ENCODE measurements at regions of chr22 and their contacts with region 1.

Region 1: DNA sequence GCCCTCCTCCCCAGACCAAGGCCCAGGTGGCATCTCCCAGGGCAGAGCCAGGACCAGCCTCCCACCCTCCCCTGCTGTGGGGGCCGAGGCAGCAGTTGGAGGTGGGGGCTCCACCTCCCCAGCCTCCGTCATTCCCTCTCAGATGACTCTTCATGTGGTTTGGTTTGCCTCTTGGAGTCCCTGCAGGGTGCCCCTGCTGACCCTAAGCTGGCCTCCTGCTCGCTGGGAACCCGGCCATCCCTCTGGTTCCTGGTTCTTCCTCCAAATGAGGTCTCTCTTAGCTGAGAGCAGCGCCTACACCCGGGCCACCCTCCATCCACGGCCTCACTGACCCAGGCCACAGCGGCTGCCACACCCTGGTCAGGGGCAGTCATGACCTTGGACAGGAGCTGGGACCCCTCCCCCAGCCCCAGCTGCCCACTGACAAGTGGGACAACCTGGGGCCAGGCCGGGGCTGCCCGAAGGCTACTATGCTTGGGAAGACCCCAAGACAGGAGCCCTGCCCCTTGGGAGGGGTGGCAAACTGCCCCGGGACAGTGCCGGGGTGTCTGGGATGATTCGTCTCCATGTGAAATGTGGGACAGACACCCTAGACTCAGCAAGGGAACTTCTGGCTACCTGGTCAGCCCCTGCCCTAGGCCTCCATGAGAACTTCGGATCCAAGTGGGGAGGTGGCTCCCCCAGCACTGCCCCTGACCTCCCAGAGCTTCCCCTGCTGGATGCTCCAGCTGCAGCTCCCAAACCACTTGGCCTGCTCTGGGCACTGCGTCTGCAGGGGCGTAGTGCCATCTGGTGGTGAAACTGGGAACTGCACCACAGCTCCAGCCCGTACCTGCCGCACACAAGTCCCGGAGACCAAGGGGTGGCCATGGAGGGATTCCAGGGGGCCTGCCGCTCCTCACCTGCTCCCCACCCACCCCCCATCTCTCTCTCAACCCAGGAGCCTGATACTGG is 194.5 kb downstream of the IGLL1 start:
- DNase-seq: peak; percentile 83 to 94 (median 91)
- H3K4me3 ChIP-seq: no peak overlapping the region
- H3K27ac ChIP-seq: no peak overlapping the region
- H3K4me1 ChIP-seq: peaks cover 0 to 2% (median 0%) of the 10 kb centered on the region in 3 donors
- H3K27me3 ChIP-seq: no peaks in the 10 kb centered on the region
- CTCF ChIP-seq: peak; percentile 100

Region 2: DNA sequence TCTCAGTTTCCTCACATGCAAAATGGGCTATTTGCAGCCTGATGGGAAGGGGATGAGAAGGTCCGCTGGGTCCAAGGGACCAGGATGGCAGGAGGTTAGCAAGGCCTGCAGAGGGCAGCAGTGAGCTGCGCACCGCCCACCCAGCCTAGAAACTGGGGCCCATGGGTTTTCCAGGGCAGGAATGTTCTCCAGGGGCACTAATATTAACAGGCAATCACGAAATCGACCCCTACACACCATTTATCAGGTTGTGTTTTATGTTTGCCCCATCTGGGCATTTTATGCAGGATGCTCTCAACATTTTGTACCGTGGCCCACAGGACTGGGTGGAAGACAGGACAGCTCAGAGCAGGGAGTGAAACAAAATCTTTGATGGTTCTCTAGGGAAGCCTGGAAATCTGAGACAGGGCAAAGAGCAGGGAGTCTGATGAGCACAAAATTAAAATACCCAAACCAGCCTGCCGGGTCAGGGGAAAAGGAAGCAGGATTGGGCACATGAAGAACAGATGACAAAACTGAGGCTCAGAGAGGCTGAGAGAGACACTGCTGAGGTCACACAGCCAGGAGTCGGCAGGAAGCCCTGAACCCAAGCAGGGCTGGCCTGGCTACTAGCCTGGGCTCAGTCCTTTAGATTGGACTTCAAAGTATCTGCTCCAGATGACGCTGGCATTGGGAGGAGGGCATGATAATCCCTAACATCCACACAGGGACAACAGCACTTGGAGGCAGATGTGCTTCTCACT is 206.9 kb before region 1 on chr22:
- intact Hi-C with region 1: loop called (anchors 10 kb)
- DNase-seq: peak; percentile 79 to 85 (median 83)
- H3K4me3 ChIP-seq: peak overlapping the region in 1 of 3 donors; percentile 2
- H3K27ac ChIP-seq: peak overlapping the region; percentile 77 to 85
- H3K4me1 ChIP-seq: peaks cover 0 to 29% (median 22%) of the 10 kb centered on the region in 3 donors
- H3K27me3 ChIP-seq: no peaks in the 10 kb centered on the region
- CTCF ChIP-seq: peak; percentile 92

Region 3: GRCh38 chr22:23315341-23315917 is 70.1 kb before region 1 on chr22:
- intact Hi-C with region 1: loop called (anchors 10 kb)
- DNase-seq: peak in 4 of 5 donors; percentile 64 to 83 (median 78)
- H3K4me3 ChIP-seq: no peak overlapping the region
- H3K27ac ChIP-seq: no peak overlapping the region
- H3K4me1 ChIP-seq: peaks cover 0 to 3% (median 0%) of the 10 kb centered on the region in 3 donors
- H3K27me3 ChIP-seq: no peaks in the 10 kb centered on the region
- CTCF ChIP-seq: peak; percentile 56

Region 4: DNA sequence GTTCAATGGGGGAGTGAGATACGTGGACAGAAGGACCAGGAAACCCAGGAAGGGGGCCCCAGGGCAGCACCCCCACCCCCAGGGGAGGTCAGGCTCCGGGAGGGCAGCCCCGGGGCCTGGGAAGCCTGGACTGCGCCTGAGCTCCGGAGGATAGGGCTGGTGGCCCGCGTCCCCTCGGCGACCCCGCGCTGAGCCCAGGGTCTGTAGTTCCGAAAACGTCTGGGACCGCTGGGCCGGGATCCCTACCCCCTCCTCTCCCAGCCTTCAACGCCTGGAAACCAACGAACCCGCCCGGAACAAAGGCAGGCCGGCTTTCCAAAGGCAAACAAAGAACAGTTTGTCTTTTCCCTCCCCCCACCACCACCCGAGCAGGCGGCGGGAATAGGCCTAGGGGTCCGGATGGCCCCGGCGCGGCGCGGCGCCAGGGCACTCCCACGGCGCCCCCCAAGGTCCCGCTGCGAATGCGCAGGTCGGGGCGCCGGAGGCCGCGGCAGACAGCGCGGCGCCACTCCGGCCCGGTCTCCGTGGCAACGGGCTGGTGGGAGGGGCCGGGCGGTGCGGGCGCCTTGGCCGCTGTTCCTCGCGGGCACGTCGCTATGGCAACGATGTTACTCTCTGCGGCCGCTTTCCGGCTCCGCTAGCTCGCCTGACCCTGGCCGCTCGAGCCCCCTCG is 136.0 kb after region 1 on chr22:
- intact Hi-C with region 1: no loop called
- DNase-seq: peak; percentile 97 to 98 (median 98)
- H3K4me3 ChIP-seq: peak overlapping the region in 2 of 3 donors; percentile 30 to 36
- H3K27ac ChIP-seq: peak overlapping the region; percentile 81 to 84
- H3K4me1 ChIP-seq: peaks cover 0 to 7% (median 7%) of the 10 kb centered on the region in 3 donors
- H3K27me3 ChIP-seq: no peaks in the 10 kb centered on the region
- CTCF ChIP-seq: no peak

Measured in kidney (tissue), 22 donors.